RWPE1 (cell line): ENCODE measurements at regions of chr15 and their contacts with region 1.

Region 1: DNA sequence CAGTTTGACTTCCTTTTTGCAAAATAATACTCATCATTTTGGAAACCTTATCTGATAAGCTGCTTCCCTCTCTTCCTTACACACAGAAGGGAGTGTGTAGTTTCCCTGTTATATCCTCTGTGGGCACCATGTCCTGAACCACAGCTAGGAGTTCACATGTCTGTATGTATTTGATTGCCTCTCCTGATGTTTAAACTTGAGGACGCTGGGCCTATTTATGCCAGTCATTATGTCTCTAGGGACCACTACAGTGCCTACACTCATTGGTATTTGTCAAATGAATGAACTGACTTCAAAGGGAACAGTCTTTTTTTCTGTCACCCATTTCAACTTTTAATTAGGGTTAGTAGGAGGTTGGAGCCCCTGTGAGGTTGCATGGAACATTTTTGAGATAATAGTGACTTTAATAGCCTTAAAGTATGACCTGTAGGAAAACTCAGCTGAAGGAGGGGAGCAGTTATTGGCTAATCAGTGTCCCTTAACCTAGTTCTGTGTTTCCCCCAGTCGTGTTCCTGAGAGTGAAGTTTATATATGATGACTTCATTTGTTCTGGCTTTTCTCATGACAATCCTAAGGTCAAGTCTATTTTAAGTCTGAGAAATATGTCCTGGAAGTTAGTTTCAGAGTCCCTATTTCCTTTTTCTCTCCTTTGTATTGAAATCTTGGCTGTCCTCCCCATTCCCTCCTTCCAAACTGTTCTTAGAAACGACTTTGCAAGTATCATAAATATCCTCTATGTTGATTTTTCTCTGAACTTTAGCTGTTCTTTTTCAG is 28.9 kb downstream of the PDE8A start:
- DNase-seq: no peak
- H3K27ac ChIP-seq: no peak overlapping the region
- CTCF ChIP-seq: peak; percentile 31

Region 2: DNA sequence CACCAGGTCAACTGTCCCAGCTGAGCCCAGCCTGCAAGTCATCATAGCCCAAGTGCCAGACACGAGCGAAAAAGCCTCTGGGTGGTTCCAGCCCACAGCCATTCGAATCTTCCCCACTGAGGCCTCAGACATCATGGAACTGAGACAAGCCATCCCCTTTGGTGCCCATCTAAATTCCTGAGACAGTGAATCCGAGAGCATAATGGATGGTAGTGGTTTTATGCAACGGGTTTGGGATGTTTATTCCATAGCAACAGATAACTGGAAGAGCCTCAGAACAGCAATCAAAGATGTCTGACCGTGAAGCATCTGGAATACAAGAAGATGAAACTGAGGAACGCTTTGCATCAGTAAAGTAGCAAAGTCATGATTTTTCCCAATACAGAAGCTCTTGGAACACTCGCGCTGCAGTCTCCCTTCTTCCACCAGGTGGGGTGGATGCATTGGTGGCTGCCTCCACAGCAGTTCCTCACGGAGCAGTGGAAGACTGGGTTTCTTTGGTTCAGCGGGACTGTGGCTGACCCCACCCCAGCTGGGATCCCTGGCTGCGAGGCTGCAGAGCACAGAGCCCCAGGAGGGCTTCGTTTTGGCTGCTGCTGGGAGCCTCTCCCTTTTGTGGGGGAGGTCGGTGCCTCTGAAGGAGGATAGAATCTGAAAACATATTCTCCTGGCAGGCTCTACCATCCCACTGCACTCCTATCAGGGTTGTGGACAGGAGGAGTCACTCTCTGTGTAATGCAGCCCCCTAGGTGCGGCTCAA is 55.3 kb before region 1 on chr15:
- CTCF ChIA-PET with region 1: interaction called, 14 read pairs
- POLR2A ChIA-PET with region 1: no interaction called
- DNase-seq: peak; percentile 74
- H3K27ac ChIP-seq: no peak overlapping the region
- CTCF ChIP-seq: peak; percentile 89